ENCODE measurements at regions of chr19 and their contacts with region 1.

Region 1: DNA sequence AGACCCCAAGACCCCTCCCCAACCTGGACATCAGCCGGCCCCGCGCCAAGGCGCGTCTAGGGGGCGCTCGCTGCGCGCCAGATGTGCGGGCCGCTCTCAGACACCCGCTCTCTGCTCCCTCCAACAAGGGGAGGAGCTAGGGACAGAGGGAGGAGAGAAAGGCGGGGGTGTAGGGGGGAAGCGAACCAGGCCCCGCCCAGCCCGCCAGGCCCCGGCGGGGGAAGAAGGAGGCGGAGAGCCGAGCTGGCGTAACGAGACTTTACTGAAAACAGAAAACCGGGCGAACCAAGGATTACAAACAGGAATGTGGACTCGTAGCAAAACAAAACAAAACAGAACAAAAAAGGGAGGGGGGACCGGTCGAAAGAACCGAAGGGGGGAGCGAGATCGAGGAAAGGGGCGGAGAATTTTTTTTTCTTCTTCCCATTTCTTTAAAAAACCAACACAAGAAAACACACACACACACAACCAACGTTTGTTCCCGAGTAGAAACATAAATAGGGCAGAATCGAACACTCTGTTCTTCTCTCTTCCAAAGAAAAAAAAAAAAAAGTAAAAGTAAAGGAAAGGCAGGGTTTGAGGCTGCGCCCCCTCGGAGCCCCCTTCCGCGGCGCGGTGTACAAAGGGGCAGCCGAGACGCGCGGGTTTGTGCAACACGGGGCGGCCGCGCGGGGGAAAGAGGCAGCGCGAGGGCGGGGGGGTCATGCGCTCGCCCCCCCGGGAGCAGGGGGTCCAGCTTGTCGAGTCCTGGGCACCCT is 1.7 kb downstream of the JUND start:
- DNase-seq: peak; percentile 91 to 92
- ATAC-seq: peak; percentile 51

Region 2: GRCh38 chr19:18192673-18193387 is 86.9 kb before region 1 on chr19 and contains the start of gene MPV17L2:
- intact Hi-C with region 1: no loop called
- DNase-seq: peak; percentile 99 to 100
- ATAC-seq: peak; percentile 84
- total RNA-seq, gene MPV17L2: 9.9 to 15.4 TPM

Region 3: GRCh38 chr19:18328340-18329034 is 48.8 kb after region 1 on chr19:
- intact Hi-C with region 1: loop called in 1 of 2 experiments (anchors 2 kb)
- DNase-seq: peak; percentile 88 to 95
- ATAC-seq: peak; percentile 91

Measured in left colon (tissue), 2 donors.